Heart right ventricle (tissue), 16 donors: ENCODE measurements at regions of chr9 and their contacts with region 1.

Region 1: DNA sequence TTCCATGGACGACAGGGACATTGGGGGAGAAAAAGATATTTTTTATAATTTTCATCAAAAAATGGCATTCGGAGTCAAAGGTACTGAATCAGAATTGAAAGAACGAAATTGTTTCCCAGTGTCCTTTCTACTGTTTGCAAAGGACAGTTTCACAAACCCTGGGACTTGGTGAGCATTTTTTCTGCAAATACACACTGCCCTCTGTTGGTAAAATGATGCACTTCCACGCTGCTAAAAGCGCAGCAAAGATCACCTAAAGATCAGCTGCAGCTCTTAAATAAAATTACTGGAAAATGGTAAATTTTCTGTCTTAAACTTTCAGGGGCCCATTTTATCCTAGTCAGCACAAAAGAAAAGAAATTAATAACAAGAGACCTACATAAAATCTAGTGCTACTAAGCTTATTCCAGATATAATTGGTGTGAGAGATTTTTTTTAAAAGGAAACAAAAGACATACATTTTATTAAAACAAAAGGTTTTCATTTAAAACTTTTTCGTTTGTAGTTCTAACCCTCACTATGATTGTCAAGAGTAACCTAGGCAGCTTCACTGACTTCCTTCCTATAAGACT is 566.0 kb downstream of the CAAP1 start:
- DNase-seq: peak in 1 of 2 donors; percentile 4
- ATAC-seq: no peak
- H3K4me3 ChIP-seq: no peak overlapping the region
- H3K27ac ChIP-seq: no peak overlapping the region
- H3K4me1 ChIP-seq: no peaks in the 10 kb centered on the region
- H3K27me3 ChIP-seq: peaks cover 0 to 9% (median 0%) of the 10 kb centered on the region in 7 donors
- CTCF ChIP-seq: peak; percentile 34 to 77 (median 70)

Region 2: DNA sequence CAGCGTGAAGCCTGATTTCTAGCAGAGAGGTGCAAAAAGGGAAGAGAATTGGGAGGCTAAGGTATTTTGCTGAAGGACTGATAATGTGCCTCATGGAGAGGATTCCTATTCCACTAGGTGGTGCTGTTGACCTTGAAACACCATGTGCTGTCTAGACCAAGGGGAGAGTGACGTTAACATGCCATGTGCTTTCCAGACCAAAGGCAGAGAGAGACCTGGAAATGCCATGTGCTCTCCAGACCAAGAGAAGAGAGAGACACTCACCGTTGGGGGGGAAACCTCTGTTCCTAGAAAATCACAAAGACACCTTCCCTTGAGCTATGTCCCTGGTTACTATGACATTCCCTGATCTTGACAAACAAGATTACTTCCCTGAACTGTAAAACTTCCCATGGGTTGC is 362.3 kb before region 1 on chr9:
- intact Hi-C with region 1: loop called in 1 of 10 experiments (anchors 10 kb)
- DNase-seq: no peak
- ATAC-seq: no peak
- H3K4me3 ChIP-seq: no peak overlapping the region
- H3K27ac ChIP-seq: no peak overlapping the region
- H3K4me1 ChIP-seq: no peaks in the 10 kb centered on the region
- H3K27me3 ChIP-seq: no peaks in the 10 kb centered on the region
- CTCF ChIP-seq: peak in 5 of 9 donors; percentile 19 to 31 (median 25)